ENCODE measurements at regions of chr19 and their contacts with region 1.

Region 1: GRCh38 chr19:6862673-6863078 is 24.7 kb upstream of the ADGRE1 start:
- DNase-seq: peak; percentile 96
- H3K4me3 Mint-ChIP-seq: peak overlapping the region; percentile 74
- H3K27ac Mint-ChIP-seq: peak overlapping the region; percentile 30
- H3K4me1 Mint-ChIP-seq: peaks cover 17% of the 10 kb centered on the region
- H3K27me3 Mint-ChIP-seq: no peaks in the 10 kb centered on the region

Region 2: DNA sequence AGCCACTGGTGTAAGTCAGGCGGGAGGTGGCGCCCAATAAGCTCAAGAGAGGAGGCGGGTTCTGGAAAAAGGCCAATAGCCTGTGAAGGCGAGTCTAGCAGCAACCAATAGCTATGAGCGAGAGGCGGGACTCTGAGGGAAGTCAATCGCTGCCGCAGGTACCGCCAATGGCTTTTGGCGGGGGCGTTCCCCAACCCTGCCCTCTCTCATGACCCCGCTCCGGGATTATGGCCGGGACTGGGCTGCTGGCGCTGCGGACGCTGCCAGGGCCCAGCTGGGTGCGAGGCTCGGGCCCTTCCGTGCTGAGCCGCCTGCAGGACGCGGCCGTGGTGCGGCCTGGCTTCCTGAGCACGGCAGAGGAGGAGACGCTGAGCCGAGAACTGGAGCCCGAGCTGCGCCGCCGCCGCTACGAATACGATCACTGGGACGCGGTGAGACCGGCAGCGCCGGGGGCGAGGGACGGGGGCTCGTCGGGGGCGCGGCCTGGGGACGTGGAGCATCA is 490.0 kb before region 1 on chr19 and contains the start of gene ALKBH7:
- CTCF ChIA-PET with region 1: interaction called, 7 read pairs
- POLR2A ChIA-PET with region 1: no interaction called
- intact Hi-C with region 1: loop called (anchors 5 kb)
- DNase-seq: peak; percentile 98
- H3K4me3 Mint-ChIP-seq: peak within 1 kb of the TSS; percentile 80
- H3K27ac Mint-ChIP-seq: peak within 1 kb of the TSS; percentile 88
- H3K4me1 Mint-ChIP-seq: peaks cover 11% of the 10 kb centered on the region
- H3K27me3 Mint-ChIP-seq: no peaks in the 10 kb centered on the region
- total RNA-seq, gene ALKBH7: 57.6 to 58.5 TPM

Region 3: DNA sequence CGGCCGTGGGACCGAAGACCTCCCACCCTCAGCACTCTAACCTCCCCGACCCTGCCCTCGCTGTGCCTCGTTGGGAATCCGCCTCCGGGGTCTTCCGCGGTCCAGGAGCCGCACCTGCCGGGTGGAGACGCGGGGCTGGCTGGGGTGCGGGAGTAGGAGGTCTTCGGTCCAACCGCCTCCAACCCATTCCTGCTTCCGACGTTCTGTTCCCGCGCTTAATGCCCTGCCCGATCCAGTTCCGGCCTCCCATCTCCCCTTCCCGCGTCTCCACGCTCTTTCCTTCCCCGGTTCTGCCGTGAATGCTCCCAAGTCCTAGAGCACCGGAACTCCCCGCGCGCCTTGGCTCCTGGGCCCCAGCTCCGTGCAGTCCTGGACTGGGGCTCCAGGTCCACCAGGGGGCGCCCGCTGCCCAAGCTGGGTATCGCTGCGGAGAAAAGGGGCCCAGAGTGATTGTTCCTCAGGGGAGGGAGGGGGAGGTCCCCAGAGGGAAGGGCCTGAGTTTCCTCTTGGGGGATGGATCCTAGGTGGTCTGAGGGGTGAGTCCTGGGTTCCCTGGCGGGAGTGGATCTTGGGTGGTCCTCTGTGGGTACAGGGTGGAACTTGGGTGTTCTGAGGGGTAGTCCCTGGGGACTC is 345.9 kb before region 1 on chr19:
- CTCF ChIA-PET with region 1: interaction called, 39 read pairs
- POLR2A ChIA-PET with region 1: no interaction called
- intact Hi-C with region 1: loop called (anchors 1 kb)
- DNase-seq: peak; percentile 94
- H3K4me3 Mint-ChIP-seq: peak overlapping the region; percentile 88
- H3K27ac Mint-ChIP-seq: peak overlapping the region; percentile 75
- H3K4me1 Mint-ChIP-seq: peaks cover 36% of the 10 kb centered on the region
- H3K27me3 Mint-ChIP-seq: peaks cover 2% of the 10 kb centered on the region

Region 4: GRCh38 chr19:6663236-6664201 is 199.2 kb before region 1 on chr19:
- CTCF ChIA-PET with region 1: no interaction called
- POLR2A ChIA-PET with region 1: no interaction called
- intact Hi-C with region 1: loop called (anchors 2 kb)
- DNase-seq: peak; percentile 75
- H3K4me3 Mint-ChIP-seq: no peak overlapping the region
- H3K27ac Mint-ChIP-seq: no peak overlapping the region
- H3K4me1 Mint-ChIP-seq: peaks cover 26% of the 10 kb centered on the region
- H3K27me3 Mint-ChIP-seq: no peaks in the 10 kb centered on the region

Region 5: GRCh38 chr19:6753178-6754031 is 109.3 kb before region 1 on chr19:
- CTCF ChIA-PET with region 1: interaction called, 10 read pairs
- POLR2A ChIA-PET with region 1: no interaction called
- intact Hi-C with region 1: no loop called
- DNase-seq: peak; percentile 88
- H3K4me3 Mint-ChIP-seq: peak overlapping the region; percentile 68
- H3K27ac Mint-ChIP-seq: peak overlapping the region; percentile 67
- H3K4me1 Mint-ChIP-seq: peaks cover 13% of the 10 kb centered on the region
- H3K27me3 Mint-ChIP-seq: no peaks in the 10 kb centered on the region

Region 6: DNA sequence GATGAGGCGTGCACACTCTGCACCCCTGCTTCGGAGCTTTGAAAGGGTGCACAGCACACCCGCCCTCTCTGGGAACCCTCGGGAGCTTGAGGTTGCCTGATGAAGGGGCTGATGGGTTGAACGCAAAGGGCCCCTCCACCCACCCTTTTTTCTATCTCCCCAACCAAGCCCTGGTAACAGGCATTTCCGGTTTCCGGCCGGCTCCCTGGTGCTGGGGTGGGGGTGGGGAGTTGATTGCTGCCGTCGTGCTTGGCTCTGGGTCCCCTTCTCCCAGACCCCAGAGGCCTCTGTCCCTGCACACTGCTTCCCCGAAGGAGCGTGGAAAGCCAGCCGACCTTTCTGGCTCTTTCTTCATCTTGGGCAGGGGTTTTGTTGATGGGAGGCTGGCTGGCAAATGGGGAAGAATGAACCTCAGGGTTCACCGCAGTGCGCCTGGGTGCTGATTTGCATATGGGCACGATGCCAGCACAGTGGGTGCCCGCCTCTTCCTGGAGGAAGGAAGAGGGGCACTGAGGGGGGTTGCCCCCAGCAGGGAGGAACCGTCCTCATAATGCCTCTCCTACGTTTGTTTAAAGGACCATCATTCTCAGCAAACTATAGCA is 61.1 kb before region 1 on chr19:
- CTCF ChIA-PET with region 1: interaction called, 10 read pairs
- POLR2A ChIA-PET with region 1: no interaction called
- intact Hi-C with region 1: loop called (anchors 1 kb)
- DNase-seq: peak; percentile 89
- H3K4me3 Mint-ChIP-seq: peak overlapping the region; percentile 75
- H3K27ac Mint-ChIP-seq: peak overlapping the region; percentile 94
- H3K4me1 Mint-ChIP-seq: peaks cover 53% of the 10 kb centered on the region
- H3K27me3 Mint-ChIP-seq: no peaks in the 10 kb centered on the region

Region 7: GRCh38 chr19:6876748-6877147 is 14.1 kb after region 1 on chr19:
- CTCF ChIA-PET with region 1: interaction called, 10 read pairs
- POLR2A ChIA-PET with region 1: no interaction called
- intact Hi-C with region 1: no loop called
- DNase-seq: no peak
- H3K4me3 Mint-ChIP-seq: no peak overlapping the region
- H3K27ac Mint-ChIP-seq: no peak overlapping the region
- H3K4me1 Mint-ChIP-seq: no peaks in the 10 kb centered on the region
- H3K27me3 Mint-ChIP-seq: no peaks in the 10 kb centered on the region